CD8-positive, alpha-beta T cell (primary cell): ENCODE measurements at regions of chr3 and their contacts with region 1.

Region 1: GRCh38 chr3:138329127-138329983 is at the start of gene NME9:
- DNase-seq: peak; percentile 82 to 96 (median 92)
- ATAC-seq: peak; percentile 89
- H3K4me3 ChIP-seq: peak within 1 kb of the TSS; percentile 65 to 78
- H3K4me3 Mint-ChIP-seq: peak within 1 kb of the TSS; percentile 98
- H3K27ac ChIP-seq: peak within 1 kb of the TSS; percentile 62 to 74
- H3K27ac Mint-ChIP-seq: peak within 1 kb of the TSS; percentile 94
- H3K4me1 ChIP-seq: peaks cover 6% of the 10 kb centered on the region
- H3K4me1 Mint-ChIP-seq: peaks cover 27% of the 10 kb centered on the region
- H3K27me3 ChIP-seq: no peaks in the 10 kb centered on the region
- H3K27me3 Mint-ChIP-seq: no peaks in the 10 kb centered on the region
- CTCF ChIP-seq: peak; percentile 67
- total RNA-seq, gene NME9: 1.2 TPM in 1 of 2 experiments, not detected in the other

Region 2: DNA sequence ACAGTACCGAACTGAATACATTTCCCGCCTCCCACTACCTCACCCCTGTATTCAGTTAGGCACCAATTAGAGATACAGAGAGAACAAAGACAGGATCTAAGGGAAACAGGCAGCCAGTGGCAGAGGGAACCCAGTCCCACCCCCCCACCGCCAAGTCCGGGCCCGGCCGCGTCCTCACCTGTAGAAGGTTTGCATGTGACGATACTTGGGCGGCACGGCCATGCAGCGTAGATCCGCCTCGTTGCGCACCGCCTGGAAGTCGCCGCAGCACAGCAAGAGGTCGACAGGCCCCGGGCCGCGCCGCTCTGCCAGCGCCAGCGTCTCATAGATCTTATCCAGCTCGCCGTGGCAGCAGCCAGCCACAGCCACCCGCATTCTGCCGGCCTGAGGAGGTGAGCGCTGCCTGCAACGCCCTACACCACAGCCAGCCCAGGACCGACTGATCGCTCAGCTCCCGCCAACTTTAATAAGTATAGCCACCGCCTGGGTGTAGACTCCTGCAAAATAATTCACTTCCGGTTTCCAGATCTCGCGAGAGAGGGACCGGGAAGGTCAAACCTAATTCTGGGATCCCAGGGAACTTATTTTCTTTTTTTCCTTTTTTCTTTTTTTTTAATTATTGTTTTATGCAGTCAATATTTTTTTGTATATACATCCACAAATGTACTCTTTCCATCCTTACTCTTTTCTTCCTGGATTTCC is 154.8 kb before region 1 on chr3 and contains the start of gene DBR1:
- CTCF ChIA-PET with region 1: interaction called, 3 read pairs
- POLR2A ChIA-PET with region 1: interaction called, 3 read pairs
- intact Hi-C with region 1: loop called in 1 of 2 experiments (anchors 1 kb)
- DNase-seq: peak; percentile 51 to 89 (median 74)
- ATAC-seq: peak; percentile 87
- H3K4me3 ChIP-seq: peak within 1 kb of the TSS; percentile 76
- H3K4me3 Mint-ChIP-seq: peak within 1 kb of the TSS; percentile 99
- H3K27ac ChIP-seq: peak within 1 kb of the TSS; percentile 71 to 79
- H3K27ac Mint-ChIP-seq: peak within 1 kb of the TSS; percentile 98
- H3K4me1 ChIP-seq: peaks cover 21% of the 10 kb centered on the region
- H3K4me1 Mint-ChIP-seq: peaks cover 40% of the 10 kb centered on the region
- H3K27me3 ChIP-seq: no peaks in the 10 kb centered on the region
- H3K27me3 Mint-ChIP-seq: no peaks in the 10 kb centered on the region
- CTCF ChIP-seq: no peak
- total RNA-seq, gene DBR1: 31.2 to 31.9 TPM

Region 3: DNA sequence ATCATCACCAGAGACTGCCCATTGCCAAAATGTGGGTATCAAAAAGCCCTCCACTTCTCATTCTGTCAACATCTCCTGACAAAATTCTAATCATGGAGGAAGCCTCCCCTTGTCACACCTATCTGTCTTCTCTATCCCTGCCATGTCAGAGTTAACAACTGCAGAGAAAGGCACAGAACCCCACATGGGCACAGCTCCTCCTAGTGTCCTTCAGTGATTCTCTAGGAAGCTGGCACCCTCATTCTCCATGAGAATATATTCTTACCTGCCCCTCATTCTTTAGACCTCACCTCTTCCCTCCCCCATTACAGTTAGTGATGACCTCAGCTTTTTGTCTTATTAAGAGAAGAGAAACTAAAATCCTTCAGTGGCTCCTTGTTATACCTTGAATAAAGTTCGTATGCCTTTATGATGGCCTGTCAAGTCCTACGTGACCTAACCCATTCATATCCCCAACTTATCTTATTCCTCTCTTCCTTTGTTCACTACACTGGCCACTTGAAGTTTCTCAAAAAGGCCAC is 44.3 kb before region 1 on chr3:
- CTCF ChIA-PET with region 1: interaction called, 5 read pairs
- POLR2A ChIA-PET with region 1: no interaction called
- intact Hi-C with region 1: loop called in 1 of 2 experiments (anchors 5 kb)
- DNase-seq: no peak
- ATAC-seq: no peak
- H3K4me3 ChIP-seq: no peak overlapping the region
- H3K4me3 Mint-ChIP-seq: no peak overlapping the region
- H3K27ac ChIP-seq: no peak overlapping the region
- H3K27ac Mint-ChIP-seq: no peak overlapping the region
- H3K4me1 ChIP-seq: no peaks in the 10 kb centered on the region
- H3K4me1 Mint-ChIP-seq: no peaks in the 10 kb centered on the region
- H3K27me3 ChIP-seq: no peaks in the 10 kb centered on the region
- H3K27me3 Mint-ChIP-seq: no peaks in the 10 kb centered on the region
- CTCF ChIP-seq: no peak

Region 4: DNA sequence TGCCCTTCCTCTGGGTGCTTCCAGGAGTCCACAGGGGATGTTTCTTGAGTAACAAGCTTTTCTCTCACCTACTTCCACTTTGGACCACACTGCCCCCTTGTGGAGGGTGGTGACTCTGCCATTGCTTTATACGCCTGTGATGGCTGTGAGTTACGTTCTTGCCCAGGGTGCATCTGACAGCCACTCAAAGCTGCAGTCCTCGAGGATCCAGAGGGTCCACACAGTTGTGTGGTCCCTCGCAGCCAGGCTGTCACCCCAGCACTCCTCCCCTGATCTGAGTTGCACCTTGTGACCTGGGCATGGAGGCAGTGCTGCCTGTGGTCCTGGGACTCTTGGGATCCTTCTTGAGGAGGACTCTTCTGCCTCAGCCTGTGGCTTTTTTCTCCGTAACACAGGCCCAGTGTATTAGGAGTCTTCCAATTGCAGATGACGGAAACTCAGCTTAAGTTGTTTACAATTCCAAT is 594.2 kb after region 1 on chr3:
- CTCF ChIA-PET with region 1: no interaction called
- POLR2A ChIA-PET with region 1: no interaction called
- intact Hi-C with region 1: loop called in 1 of 2 experiments (anchors 5 kb)
- DNase-seq: peak; percentile 72 to 88 (median 85)
- ATAC-seq: peak; percentile 97
- H3K4me3 ChIP-seq: no peak overlapping the region
- H3K4me3 Mint-ChIP-seq: no peak overlapping the region
- H3K27ac ChIP-seq: no peak overlapping the region
- H3K27ac Mint-ChIP-seq: no peak overlapping the region
- H3K4me1 ChIP-seq: no peaks in the 10 kb centered on the region
- H3K4me1 Mint-ChIP-seq: no peaks in the 10 kb centered on the region
- H3K27me3 ChIP-seq: no peaks in the 10 kb centered on the region
- H3K27me3 Mint-ChIP-seq: peaks cover 15% of the 10 kb centered on the region
- CTCF ChIP-seq: peak; percentile 81

Region 5: GRCh38 chr3:139389458-139390209 is 1060.3 kb after region 1 on chr3 and contains the start of gene COPB2:
- CTCF ChIA-PET with region 1: no interaction called
- POLR2A ChIA-PET with region 1: no interaction called
- intact Hi-C with region 1: loop called in 1 of 2 experiments (anchors 1 kb)
- DNase-seq: peak; percentile 92 to 98 (median 96)
- ATAC-seq: peak; percentile 85
- H3K4me3 ChIP-seq: peak within 1 kb of the TSS; percentile 72 to 94
- H3K4me3 Mint-ChIP-seq: peak within 1 kb of the TSS; percentile 100
- H3K27ac ChIP-seq: peak within 1 kb of the TSS; percentile 92 to 95
- H3K27ac Mint-ChIP-seq: peak within 1 kb of the TSS; percentile 99
- H3K4me1 ChIP-seq: peaks cover 18% of the 10 kb centered on the region
- H3K4me1 Mint-ChIP-seq: peaks cover 54% of the 10 kb centered on the region
- H3K27me3 ChIP-seq: no peaks in the 10 kb centered on the region
- H3K27me3 Mint-ChIP-seq: no peaks in the 10 kb centered on the region
- CTCF ChIP-seq: no peak
- total RNA-seq, gene COPB2: 12.8 to 16.4 TPM